AG04449 (cell line): ENCODE measurements at regions of chr7 and their contacts with region 1.

Region 1: DNA sequence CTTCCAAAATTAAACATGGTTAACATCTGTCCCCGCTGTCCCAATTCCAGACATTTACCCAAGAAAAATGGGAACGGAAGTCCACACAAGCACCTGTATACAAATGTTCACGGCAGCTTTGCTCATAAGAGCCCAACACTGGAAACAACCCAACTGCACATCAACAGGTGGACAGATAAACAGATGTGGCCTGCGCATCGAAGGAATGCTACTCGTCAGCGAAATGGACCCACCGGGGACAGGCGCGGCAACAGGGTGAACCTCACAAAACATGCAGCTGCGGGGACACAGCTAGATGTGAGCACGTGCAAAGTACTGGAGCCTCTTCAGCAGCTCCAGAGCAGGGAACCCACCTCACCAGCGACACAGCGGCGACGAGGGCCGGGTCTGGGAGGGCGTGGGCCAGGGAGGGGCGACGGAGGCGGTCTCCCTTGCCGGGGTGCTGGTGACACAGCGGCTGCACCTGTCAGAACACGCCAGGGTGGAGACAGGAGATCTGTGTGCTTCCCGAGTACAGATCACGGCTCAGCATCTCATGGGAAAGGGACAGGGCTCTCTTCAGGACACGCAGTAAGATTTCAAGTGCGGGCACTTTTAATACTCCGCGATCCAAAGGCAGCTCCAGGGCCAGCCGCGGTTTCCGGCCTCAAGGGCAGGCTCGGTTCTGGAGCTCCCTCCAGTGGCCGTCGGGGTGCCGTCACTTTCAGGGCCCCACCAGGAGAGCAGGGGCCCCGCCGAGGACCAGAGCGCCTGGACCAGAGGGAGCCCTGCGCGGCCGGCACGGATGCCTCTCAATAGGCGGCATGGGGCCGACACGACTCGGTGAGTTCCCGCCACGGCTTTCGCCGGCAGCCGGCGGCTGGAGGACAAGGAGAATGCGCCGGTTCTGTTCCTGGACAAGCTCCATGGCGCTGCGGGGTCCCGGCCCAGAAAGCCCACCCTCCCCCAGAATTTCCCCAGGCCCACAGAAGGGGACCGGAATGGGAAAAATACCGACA is 21.2 kb downstream of the GPR146 start:
- DNase-seq: no peak
- H3K4me3 ChIP-seq: no peak overlapping the region; the same call in 1 of the 2 replicates
- CTCF ChIP-seq: peak; percentile 90

Region 2: GRCh38 chr7:57482-58255 is 1007.9 kb before region 1 on chr7:
- CTCF ChIA-PET with region 1: no interaction called
- POLR2A ChIA-PET with region 1: no interaction called
- DNase-seq: no peak
- H3K4me3 ChIP-seq: no peak overlapping the region
- CTCF ChIP-seq: no peak

Region 3: GRCh38 chr7:842431-843031 is 223.0 kb before region 1 on chr7:
- CTCF ChIA-PET with region 1: no interaction called
- POLR2A ChIA-PET with region 1: no interaction called
- DNase-seq: no peak
- H3K4me3 ChIP-seq: no peak overlapping the region
- CTCF ChIP-seq: no peak

Region 4: DNA sequence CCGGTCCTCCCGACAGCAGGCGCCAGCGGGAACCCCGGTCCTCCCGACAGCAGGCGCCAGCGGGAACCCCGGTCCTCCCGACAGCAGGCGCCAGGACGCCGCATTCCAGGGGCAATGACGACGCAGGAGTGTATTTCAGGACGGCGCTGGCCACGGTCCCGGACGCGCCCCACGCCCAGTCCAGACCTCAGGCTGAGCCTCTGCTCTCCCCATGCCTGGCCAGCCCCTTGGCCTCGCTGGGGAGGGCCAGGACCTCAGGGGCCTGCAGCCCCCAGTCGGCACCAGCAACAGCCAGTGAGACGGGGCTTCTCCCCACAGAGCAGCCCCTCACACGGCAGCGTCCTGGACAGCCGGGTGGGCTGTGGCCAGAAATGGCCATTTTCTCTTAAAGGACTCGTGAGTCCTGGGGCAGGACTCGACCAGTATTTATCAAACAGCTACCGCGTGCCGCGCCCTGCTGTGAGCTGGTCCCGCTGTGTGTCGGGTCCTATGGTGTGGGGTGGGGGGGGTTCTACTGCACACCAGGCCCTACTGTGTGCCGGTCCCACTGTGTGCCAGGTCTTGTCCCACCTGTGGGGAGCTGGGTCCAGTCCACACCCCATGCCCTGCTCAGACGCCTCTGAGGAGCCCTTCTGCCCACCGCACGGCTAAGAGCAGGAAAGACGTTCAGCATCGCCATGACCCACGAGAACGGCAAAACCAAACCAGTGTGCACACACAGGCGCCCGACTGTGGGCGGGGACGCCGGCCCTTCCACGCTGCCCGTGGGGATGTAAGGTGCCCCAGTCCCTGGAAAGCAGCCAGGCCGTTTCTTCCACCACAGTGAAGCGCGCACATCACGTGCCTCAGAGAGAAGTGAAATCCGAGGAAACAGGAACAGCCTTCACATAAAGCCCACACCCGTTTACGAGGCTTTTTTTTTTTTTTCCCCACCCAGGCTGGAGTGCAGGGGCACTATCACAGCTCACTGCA is 155.9 kb before region 1 on chr7:
- CTCF ChIA-PET with region 1: interaction called, 13 read pairs
- POLR2A ChIA-PET with region 1: no interaction called
- DNase-seq: no peak
- H3K4me3 ChIP-seq: peak overlapping the region; percentile 36
- CTCF ChIP-seq: no peak

Region 5: DNA sequence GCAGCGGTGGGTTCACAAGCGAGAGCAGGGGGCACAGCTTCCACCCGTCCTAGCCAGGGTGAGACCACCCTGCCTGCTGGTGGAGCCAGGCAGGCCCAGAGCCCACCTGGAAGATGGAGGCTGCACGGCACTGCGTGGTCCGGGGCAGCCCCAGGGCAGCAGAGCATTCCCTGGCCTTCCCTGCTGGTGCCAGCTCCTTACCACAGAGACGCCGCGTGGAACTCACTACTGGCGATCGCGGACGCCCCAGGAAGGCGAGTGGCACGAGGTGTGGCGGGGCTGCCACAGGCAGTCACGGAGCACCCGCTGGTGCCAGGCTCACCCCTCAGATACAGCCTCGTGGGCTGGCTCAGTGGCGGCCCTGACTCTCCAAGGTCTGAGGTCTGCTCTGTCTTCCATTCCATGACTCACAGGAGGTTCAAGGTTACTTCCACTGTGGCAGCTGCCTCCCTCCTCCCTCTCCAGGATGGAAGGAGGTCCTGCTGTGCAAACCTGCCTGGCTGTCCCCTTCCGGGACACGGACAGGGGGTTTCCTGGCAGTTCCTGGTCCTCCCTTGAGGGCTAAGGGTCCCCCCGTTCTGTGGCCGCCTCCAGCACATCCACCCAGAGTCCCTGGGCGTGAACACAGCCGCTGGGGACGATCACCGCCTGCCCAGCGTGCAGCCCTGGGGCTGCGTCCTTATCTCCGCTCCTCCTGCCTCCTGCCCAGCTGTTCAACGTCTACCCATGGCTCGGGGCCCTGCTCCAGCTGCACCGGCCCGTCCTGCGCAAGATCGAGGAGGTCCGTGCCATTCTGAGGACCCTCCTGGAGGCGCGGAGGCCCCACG is 79.4 kb before region 1 on chr7:
- CTCF ChIA-PET with region 1: interaction called, 558 read pairs
- POLR2A ChIA-PET with region 1: no interaction called
- DNase-seq: no peak
- H3K4me3 ChIP-seq: no peak overlapping the region
- CTCF ChIP-seq: no peak

Region 6: GRCh38 chr7:1020849-1021251 is 44.7 kb before region 1 on chr7:
- CTCF ChIA-PET with region 1: interaction called, 14 read pairs
- POLR2A ChIA-PET with region 1: no interaction called
- DNase-seq: no peak
- H3K4me3 ChIP-seq: no peak overlapping the region
- CTCF ChIP-seq: no peak

Region 7: GRCh38 chr7:1086588-1087464 is 21.3 kb after region 1 on chr7:
- CTCF ChIA-PET with region 1: interaction called, 85 read pairs
- POLR2A ChIA-PET with region 1: no interaction called
- DNase-seq: no peak
- H3K4me3 ChIP-seq: peak overlapping the region; percentile 56
- CTCF ChIP-seq: peak; percentile 83